CD8-positive, alpha-beta memory T cell (primary cell): ENCODE measurements at regions of chr3 and their contacts with region 1.

Region 1: DNA sequence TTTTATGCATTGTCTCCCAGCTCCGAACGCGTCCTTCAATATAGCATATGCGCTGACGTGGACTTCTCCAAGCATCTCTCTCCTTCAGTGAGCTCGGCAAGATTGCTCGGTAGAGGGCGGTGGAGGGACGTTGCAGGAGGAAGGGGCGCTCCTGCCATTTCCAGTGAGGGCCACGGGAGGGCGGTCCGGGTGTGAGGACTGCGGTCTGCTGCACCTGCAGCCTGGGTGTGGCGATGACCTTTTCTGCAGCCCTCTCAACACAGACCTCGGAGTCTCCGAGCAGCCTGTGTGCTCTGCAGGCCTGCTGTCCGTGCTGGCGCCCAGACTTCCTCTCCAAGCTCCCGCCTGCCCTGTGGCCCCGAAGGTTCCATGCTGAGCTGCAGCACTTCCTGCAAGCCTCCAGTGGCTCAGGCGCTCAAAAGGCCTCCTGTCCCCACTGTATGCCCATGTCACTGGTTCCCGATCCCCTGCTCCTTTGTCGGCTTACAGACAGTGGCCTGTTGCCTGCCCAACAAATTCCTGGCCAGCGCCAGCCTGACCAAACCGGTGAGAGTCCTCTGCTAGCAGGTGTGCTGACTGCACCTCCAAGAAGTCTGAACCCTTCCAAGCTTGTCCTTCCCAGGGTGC is 8.9 kb upstream of the RTP3 start:
- DNase-seq: peak; percentile 81 to 94 (median 85)
- H3K4me3 ChIP-seq: peak overlapping the region; percentile 23
- H3K4me3 Mint-ChIP-seq: peak overlapping the region in 6 of 7 donors; percentile 62 to 81 (median 69)
- H3K27ac ChIP-seq: no peak overlapping the region
- H3K27ac Mint-ChIP-seq: peak overlapping the region in 3 of 8 donors; percentile 40 to 73 (median 61)
- H3K4me1 ChIP-seq: peaks cover 12% of the 10 kb centered on the region
- H3K4me1 Mint-ChIP-seq: peaks cover 16 to 33% (median 23%) of the 10 kb centered on the region in 3 donors
- H3K27me3 ChIP-seq: no peaks in the 10 kb centered on the region
- H3K27me3 Mint-ChIP-seq: peaks cover 0 to 2% of the 10 kb centered on the region in 2 donors

Region 2: GRCh38 chr3:46469680-46470357 is 19.0 kb before region 1 on chr3:
- CTCF ChIA-PET with region 1: interaction called, 12 read pairs
- POLR2A ChIA-PET with region 1: no interaction called
- DNase-seq: no peak
- H3K4me3 ChIP-seq: no peak overlapping the region
- H3K4me3 Mint-ChIP-seq: no peak overlapping the region
- H3K27ac ChIP-seq: no peak overlapping the region
- H3K27ac Mint-ChIP-seq: no peak overlapping the region
- H3K4me1 ChIP-seq: no peaks in the 10 kb centered on the region
- H3K4me1 Mint-ChIP-seq: peaks cover 0 to 3% (median 0%) of the 10 kb centered on the region in 3 donors
- H3K27me3 ChIP-seq: peaks cover 6% of the 10 kb centered on the region
- H3K27me3 Mint-ChIP-seq: peaks cover 20 to 27% of the 10 kb centered on the region in 2 donors

Region 3: GRCh38 chr3:46517016-46517793 is 28.4 kb after region 1 on chr3:
- CTCF ChIA-PET with region 1: interaction called, 12 read pairs
- POLR2A ChIA-PET with region 1: no interaction called
- DNase-seq: no peak
- H3K4me3 ChIP-seq: no peak overlapping the region
- H3K4me3 Mint-ChIP-seq: no peak overlapping the region
- H3K27ac ChIP-seq: no peak overlapping the region
- H3K27ac Mint-ChIP-seq: no peak overlapping the region
- H3K4me1 ChIP-seq: no peaks in the 10 kb centered on the region
- H3K4me1 Mint-ChIP-seq: peaks cover 4 to 16% (median 4%) of the 10 kb centered on the region in 3 donors
- H3K27me3 ChIP-seq: no peaks in the 10 kb centered on the region
- H3K27me3 Mint-ChIP-seq: peaks cover 0 to 2% of the 10 kb centered on the region in 2 donors

Region 4: GRCh38 chr3:46549408-46549904 is 60.6 kb after region 1 on chr3:
- CTCF ChIA-PET with region 1: interaction called, 18 read pairs
- POLR2A ChIA-PET with region 1: interaction called, 3 read pairs
- DNase-seq: no peak
- H3K4me3 ChIP-seq: no peak overlapping the region
- H3K4me3 Mint-ChIP-seq: no peak overlapping the region
- H3K27ac ChIP-seq: peak overlapping the region; percentile 43
- H3K27ac Mint-ChIP-seq: peak overlapping the region in 1 of 8 donors; percentile 21
- H3K4me1 ChIP-seq: peaks cover 5% of the 10 kb centered on the region
- H3K4me1 Mint-ChIP-seq: peaks cover 8 to 20% (median 18%) of the 10 kb centered on the region in 3 donors
- H3K27me3 ChIP-seq: no peaks in the 10 kb centered on the region
- H3K27me3 Mint-ChIP-seq: peaks cover 0 to 3% of the 10 kb centered on the region in 2 donors

Region 5: DNA sequence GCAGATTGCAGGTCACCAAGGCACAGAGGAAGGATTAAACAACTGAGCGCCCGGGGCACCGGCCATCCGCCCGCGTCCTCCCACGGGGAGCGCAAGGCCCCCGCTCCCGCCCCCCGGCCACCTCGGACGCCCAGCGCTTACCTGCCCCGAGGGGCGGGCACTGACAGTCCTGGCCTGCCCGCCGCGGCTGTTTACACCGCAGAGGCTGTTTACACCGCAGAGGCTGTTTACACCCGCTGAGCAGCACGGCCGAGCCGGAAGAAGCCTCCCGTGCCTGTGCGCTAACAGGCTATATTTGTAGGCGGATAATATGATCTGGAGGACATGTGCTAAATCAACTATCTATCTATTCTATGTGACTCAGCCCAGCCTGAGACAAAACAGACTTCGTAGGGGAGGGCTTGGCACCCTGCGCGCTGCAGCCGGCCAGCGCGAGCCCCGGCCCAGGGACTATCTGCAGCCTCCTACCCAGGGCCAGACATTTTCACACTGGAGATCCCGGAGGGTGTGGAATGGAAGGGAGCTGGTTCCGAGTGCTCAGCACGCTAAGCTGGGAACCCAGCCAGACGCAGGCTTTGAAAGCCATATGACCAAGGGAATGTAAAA is 77.3 kb after region 1 on chr3 and contains the start of gene LRRC2:
- CTCF ChIA-PET with region 1: interaction called, 214 read pairs
- POLR2A ChIA-PET with region 1: no interaction called
- DNase-seq: peak in 4 of 5 donors; percentile 12 to 57 (median 14)
- H3K4me3 ChIP-seq: peak within 1 kb of the TSS; percentile 41
- H3K4me3 Mint-ChIP-seq: peak within 1 kb of the TSS; percentile 49 to 80 (median 67)
- H3K27ac ChIP-seq: no peak within 1 kb of the TSS
- H3K27ac Mint-ChIP-seq: peak within 1 kb of the TSS in 3 of 8 donors; percentile 17 to 41 (median 26)
- H3K4me1 ChIP-seq: peaks cover 10% of the 10 kb centered on the region
- H3K4me1 Mint-ChIP-seq: peaks cover 5 to 20% (median 15%) of the 10 kb centered on the region in 3 donors
- H3K27me3 ChIP-seq: peaks cover 14% of the 10 kb centered on the region
- H3K27me3 Mint-ChIP-seq: peaks cover 5 to 36% of the 10 kb centered on the region in 2 donors
- total RNA-seq, gene LRRC2: 0.04 TPM